ENCODE measurements at regions of chr9 and their contacts with region 1.

Region 1: DNA sequence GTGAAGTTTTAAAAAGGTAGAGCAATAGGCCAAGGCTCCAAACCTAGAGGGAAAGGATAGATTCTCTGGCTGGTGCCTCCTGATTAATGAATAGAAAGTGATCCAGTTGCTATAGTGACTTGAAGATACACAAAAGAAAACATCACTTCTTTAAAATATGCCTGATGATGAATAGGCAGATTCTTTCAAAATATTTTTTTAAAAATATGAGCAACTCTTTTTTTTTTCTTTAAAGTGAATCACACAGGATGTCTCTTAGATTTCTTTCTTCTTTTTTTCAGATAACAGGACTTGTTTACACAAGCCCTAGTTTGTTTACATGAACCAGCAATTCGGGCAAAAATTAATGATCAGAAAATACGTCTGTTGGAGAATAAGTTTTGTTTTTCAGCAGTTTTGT is 124.4 kb downstream of the RFK start:
- DNase-seq: no peak
- H3K4me3 ChIP-seq: no peak overlapping the region
- H3K27ac ChIP-seq: no peak overlapping the region
- H3K4me1 ChIP-seq: peaks cover 0 to 12% (median 3%) of the 10 kb centered on the region in 4 donors
- H3K27me3 ChIP-seq: no peaks in the 10 kb centered on the region
- CTCF ChIP-seq: no peak

Region 2: DNA sequence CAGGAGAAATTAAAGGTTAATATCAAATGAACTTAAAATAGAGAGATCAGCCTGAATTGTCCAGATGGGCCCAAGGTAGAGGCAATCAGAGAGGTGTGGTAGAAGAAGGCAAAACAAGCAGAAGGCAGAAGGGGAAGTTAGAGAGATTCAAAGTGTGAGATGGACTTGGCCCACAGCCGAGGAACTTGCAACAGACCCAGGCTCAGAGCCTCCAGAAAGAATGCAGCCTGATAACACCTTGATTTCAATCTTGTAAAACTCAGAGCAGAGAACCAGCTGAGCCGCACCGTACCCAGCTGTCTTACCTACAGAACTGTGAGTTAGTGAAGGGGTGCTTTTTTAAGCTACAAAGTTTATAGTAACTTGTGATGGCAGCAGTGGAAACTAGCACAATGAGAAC is 66.4 kb before region 1 on chr9:
- intact Hi-C with region 1: loop called (anchors 2 kb)
- DNase-seq: peak in 1 of 2 donors; percentile 36
- H3K4me3 ChIP-seq: no peak overlapping the region
- H3K27ac ChIP-seq: no peak overlapping the region
- H3K4me1 ChIP-seq: no peaks in the 10 kb centered on the region
- H3K27me3 ChIP-seq: no peaks in the 10 kb centered on the region
- CTCF ChIP-seq: no peak

Measured in tibial artery (tissue), 4 donors.